T-cell (primary cell): ENCODE measurements at regions of chr11 and their contacts with region 1.

Region 1: DNA sequence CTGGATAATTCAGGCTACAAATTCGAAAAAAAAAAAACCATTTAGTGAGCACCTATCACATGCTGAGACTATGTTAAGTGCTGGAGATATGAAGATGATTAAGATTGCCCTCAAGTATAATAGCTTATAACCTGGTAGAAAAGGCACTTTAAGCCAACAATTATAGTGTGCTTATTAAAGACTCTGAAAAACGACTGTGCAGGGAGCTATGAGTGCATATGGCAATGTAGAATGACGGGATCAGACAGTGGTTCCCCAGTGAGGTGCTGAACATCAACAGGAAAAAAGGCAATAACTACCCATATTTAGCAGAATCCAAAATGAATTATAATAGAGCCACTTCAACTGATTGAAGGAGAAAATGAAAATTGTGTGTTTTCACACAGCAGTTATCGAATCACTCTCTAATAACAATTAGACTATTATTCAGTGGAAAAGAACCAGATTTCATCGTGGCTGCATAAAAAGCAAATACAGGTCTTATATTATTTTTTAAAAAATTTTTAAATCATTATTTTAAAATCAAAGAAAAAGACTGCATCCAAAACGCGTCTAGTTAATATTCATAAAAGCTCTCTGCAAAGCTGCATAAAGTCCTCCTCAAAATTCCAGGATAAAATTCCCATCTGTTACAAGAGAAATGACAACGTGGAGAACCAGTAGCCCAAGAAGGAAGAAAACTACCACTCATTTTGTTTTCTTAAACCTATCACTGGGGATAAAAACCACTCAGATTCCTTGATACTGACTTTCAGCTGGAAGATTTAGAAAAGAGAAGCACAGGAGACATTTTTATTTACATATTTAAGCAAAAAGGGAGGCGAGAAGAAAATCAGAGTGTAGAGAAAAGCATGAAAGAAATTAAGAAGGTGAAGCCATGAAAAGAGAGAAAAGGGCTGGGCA is 1.1 kb downstream of the MTMR2 start:
- DNase-seq: peak in 1 of 35 experiments; percentile 8
- ATAC-seq: no peak
- H3K4me3 ChIP-seq: peak overlapping the region; percentile 81 to 96
- H3K4me3 Mint-ChIP-seq: peak overlapping the region; percentile 87 to 97 (median 92)
- H3K27ac ChIP-seq: peak overlapping the region; percentile 84
- H3K27ac Mint-ChIP-seq: peak overlapping the region; percentile 88 to 98
- H3K4me1 ChIP-seq: peaks cover 0 to 2% of the 10 kb centered on the region in 2 experiments
- H3K4me1 Mint-ChIP-seq: peaks cover 25 to 35% (median 28%) of the 10 kb centered on the region in 3 donors
- H3K27me3 ChIP-seq: peaks cover 0 to 3% of the 10 kb centered on the region in 2 experiments
- H3K27me3 Mint-ChIP-seq: peaks cover 0 to 9% of the 10 kb centered on the region in 2 donors

Region 2: GRCh38 chr11:95897731-95898130 is 25.1 kb before region 1 on chr11:
- CTCF ChIA-PET with region 1: interaction called in 1 of 2 experiments, 11 read pairs
- POLR2A ChIA-PET with region 1: no interaction called
- DNase-seq: no peak
- ATAC-seq: no peak
- H3K4me3 ChIP-seq: no peak overlapping the region
- H3K4me3 Mint-ChIP-seq: no peak overlapping the region
- H3K27ac ChIP-seq: no peak overlapping the region
- H3K27ac Mint-ChIP-seq: no peak overlapping the region
- H3K4me1 ChIP-seq: no peaks in the 10 kb centered on the region
- H3K4me1 Mint-ChIP-seq: peaks cover 3 to 8% (median 4%) of the 10 kb centered on the region in 3 donors
- H3K27me3 ChIP-seq: no peaks in the 10 kb centered on the region
- H3K27me3 Mint-ChIP-seq: no peaks in the 10 kb centered on the region

Region 3: DNA sequence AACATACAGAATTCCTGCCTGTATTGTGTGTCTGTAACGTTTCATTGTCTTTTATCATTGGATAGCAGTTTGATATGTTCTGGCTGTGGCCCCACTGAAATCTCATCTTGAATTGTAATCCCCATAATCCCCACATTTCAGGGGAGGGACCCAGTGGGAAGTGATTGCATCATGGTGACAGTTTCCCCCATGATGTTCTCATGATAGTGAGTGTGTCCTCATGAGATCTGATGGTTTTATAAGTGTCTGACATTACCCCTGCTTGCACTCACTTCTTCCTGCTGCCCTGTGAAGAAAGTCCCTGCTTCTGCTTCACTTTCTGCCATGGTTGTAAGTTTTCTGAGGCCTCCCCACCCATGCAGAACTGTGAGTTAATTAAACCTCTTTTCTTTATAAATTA is 20.8 kb after region 1 on chr11:
- CTCF ChIA-PET with region 1: no interaction called
- POLR2A ChIA-PET with region 1: no interaction called
- DNase-seq: no peak
- ATAC-seq: no peak
- H3K4me3 ChIP-seq: no peak overlapping the region
- H3K4me3 Mint-ChIP-seq: no peak overlapping the region
- H3K27ac ChIP-seq: no peak overlapping the region
- H3K27ac Mint-ChIP-seq: no peak overlapping the region
- H3K4me1 ChIP-seq: no peaks in the 10 kb centered on the region
- H3K4me1 Mint-ChIP-seq: no peaks in the 10 kb centered on the region
- H3K27me3 ChIP-seq: peaks cover 0 to under 1% of the 10 kb centered on the region in 2 experiments
- H3K27me3 Mint-ChIP-seq: no peaks in the 10 kb centered on the region